Activated CD4-positive, alpha-beta memory T cell treated with anti-CD3 and anti-CD28 coated beads for 36 hours (primary cell): ENCODE measurements at regions of chr1 and their contacts with region 1.

Region 1: DNA sequence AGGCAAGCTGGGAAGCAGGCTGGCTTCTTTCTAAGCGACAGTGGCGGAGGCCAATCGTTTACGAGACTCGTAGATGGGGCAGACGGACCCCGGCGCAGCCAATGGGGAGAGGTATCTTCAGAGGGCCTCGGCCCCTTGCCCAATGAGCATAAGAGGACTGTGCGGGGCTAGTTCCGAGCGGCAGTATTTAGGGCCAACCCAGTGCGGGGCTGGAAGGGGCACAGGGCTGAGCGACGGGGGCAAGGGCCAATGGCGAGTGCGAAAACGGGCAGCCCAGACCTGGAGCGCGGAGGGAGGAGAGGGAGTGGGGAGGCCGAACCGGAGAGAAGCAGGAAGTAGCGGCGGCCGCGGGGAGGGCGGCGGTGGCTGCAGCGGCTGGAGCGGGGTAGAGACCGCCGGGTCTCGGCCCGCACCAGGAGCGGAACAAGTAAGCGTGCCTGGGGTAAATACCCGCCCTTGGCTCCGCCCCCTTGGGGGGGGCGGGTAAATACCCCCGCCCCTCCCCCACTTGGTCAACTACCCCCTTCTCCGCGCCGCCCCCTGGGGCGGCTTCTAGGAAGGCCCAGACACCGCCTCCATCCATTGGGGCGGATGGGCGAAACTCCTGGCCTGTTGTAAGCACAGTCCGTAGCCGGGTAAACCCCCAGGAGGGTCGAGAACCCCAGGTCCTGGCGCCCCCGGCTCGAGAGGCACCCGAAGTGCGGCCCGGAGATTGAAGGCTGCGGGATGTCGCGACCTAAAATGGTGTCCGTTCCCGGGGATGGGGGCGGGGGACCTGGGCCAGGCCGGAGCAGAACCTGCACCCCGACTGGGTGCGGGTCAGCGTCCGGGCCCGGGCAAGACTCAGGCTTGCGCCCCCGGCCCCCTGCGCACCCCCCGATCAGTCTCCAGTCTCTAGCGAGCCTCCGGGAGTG is at the start of gene ZNF687:
- DNase-seq: peak; percentile 99
- H3K4me3 Mint-ChIP-seq: peak within 1 kb of the TSS; percentile 94
- H3K27ac Mint-ChIP-seq: peak within 1 kb of the TSS; percentile 98
- H3K4me1 Mint-ChIP-seq: peaks cover 28% of the 10 kb centered on the region
- H3K27me3 Mint-ChIP-seq: no peaks in the 10 kb centered on the region
- total RNA-seq, gene ZNF687: 27.1 to 27.2 TPM

Region 2: DNA sequence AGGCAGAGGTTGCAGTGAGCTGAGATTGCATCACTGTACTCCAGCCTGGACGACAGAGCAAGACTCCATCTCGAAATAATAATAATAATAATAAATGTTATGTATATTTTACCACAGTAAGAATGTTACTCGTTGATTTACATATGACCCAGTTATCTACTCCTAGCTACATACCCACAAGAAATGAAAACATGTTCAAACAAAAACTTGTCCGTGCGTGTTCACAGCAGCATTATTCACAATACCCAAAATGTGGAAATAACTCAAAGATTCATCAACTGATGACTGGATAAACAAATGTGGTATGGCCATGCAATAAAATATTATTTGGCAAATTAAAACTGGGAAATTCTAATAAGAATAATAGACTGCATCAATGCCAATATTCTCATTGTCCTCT is 621.1 kb before region 1 on chr1:
- CTCF ChIA-PET with region 1: no interaction called
- POLR2A ChIA-PET with region 1: no interaction called
- intact Hi-C with region 1: no loop called
- DNase-seq: no peak
- H3K4me3 Mint-ChIP-seq: no peak overlapping the region
- H3K27ac Mint-ChIP-seq: no peak overlapping the region
- H3K4me1 Mint-ChIP-seq: peaks cover 2% of the 10 kb centered on the region
- H3K27me3 Mint-ChIP-seq: no peaks in the 10 kb centered on the region

Region 3: GRCh38 chr1:150902356-150903140 is 379.7 kb before region 1 on chr1:
- CTCF ChIA-PET with region 1: no interaction called
- POLR2A ChIA-PET with region 1: no interaction called
- intact Hi-C with region 1: no loop called
- DNase-seq: no peak
- H3K4me3 Mint-ChIP-seq: no peak overlapping the region
- H3K27ac Mint-ChIP-seq: no peak overlapping the region
- H3K4me1 Mint-ChIP-seq: peaks cover 10% of the 10 kb centered on the region
- H3K27me3 Mint-ChIP-seq: no peaks in the 10 kb centered on the region

Region 4: GRCh38 chr1:151165738-151166505 is 116.3 kb before region 1 on chr1 and contains the starts of genes LYSMD1 and SCNM1:
- CTCF ChIA-PET with region 1: no interaction called
- POLR2A ChIA-PET with region 1: no interaction called
- intact Hi-C with region 1: loop called (anchors 1 kb)
- DNase-seq: peak; percentile 99
- H3K4me3 Mint-ChIP-seq: peak within 1 kb of the TSS; percentile 92
- H3K27ac Mint-ChIP-seq: peak within 1 kb of the TSS; percentile 92
- H3K4me1 Mint-ChIP-seq: peaks cover 49% of the 10 kb centered on the region
- H3K27me3 Mint-ChIP-seq: peaks cover 2% of the 10 kb centered on the region
- total RNA-seq, gene LYSMD1: 1.8 to 2.6 TPM
- total RNA-seq, gene SCNM1: 67.5 to 67.8 TPM

Region 5: GRCh38 chr1:151311589-151312331 is 29.5 kb after region 1 on chr1:
- CTCF ChIA-PET with region 1: interaction called, 4 read pairs
- POLR2A ChIA-PET with region 1: interaction called, 16 read pairs
- intact Hi-C with region 1: loop called (anchors 1 kb)
- DNase-seq: peak; percentile 91
- H3K4me3 Mint-ChIP-seq: peak overlapping the region; percentile 1
- H3K27ac Mint-ChIP-seq: peak overlapping the region; percentile 97
- H3K4me1 Mint-ChIP-seq: peaks cover 41% of the 10 kb centered on the region
- H3K27me3 Mint-ChIP-seq: no peaks in the 10 kb centered on the region

Region 6: GRCh38 chr1:151346769-151347522 is 64.7 kb after region 1 on chr1 and contains the start of gene RFX5:
- CTCF ChIA-PET with region 1: no interaction called
- POLR2A ChIA-PET with region 1: interaction called, 4 read pairs
- intact Hi-C with region 1: loop called (anchors 1 kb)
- DNase-seq: peak; percentile 97
- H3K4me3 Mint-ChIP-seq: peak within 1 kb of the TSS; percentile 89
- H3K27ac Mint-ChIP-seq: peak within 1 kb of the TSS; percentile 92
- H3K4me1 Mint-ChIP-seq: peaks cover 32% of the 10 kb centered on the region
- H3K27me3 Mint-ChIP-seq: no peaks in the 10 kb centered on the region
- total RNA-seq, gene RFX5: 64.7 to 68.7 TPM

Region 7: DNA sequence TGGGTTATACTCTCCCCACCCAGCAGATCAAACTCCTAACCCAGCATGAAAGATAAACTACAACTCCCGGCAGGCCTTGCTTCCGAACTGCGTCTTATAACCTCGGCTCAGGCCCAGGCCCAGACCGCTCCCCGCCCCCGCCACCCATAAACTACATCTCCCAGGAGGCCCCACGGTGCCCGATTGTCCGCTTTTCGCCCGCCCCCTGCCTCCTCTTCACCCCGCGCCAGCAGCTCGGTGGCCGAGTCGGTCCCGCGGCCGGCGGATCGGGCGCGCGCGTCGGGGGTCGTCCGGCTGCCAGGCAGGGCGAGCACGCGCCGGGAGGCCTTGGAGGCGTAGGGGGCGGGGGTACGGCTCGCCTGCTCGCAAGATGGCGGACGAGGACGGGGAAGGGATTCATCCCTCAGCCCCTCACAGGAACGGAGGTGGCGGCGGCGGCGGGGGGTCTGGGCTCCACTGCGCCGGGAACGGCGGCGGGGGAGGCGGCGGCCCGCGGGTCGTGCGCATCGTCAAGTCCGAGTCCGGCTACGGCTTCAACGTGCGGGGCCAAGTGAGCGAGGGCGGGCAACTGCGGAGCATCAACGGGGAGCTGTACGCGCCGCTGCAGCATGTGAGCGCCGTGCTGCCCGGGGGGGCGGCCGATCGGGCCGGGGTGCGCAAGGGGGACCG is 329.7 kb after region 1 on chr1 and contains the start of gene SNX27:
- CTCF ChIA-PET with region 1: no interaction called
- POLR2A ChIA-PET with region 1: no interaction called
- intact Hi-C with region 1: loop called (anchors 5 kb)
- DNase-seq: peak; percentile 93
- H3K4me3 Mint-ChIP-seq: peak within 1 kb of the TSS; percentile 94
- H3K27ac Mint-ChIP-seq: peak within 1 kb of the TSS; percentile 79
- H3K4me1 Mint-ChIP-seq: peaks cover 49% of the 10 kb centered on the region
- H3K27me3 Mint-ChIP-seq: peaks cover 1% of the 10 kb centered on the region
- total RNA-seq, gene SNX27: 27.1 to 30.7 TPM